Dendritic cell treated with granulocyte-macrophage colony-stimulating factor and Interleukin-4, amounts not matched to agents 40 ng/mL and 50 ng/mL, for 4 days (primary cell): ENCODE measurements at regions of chr4 and their contacts with region 1.

Region 1: DNA sequence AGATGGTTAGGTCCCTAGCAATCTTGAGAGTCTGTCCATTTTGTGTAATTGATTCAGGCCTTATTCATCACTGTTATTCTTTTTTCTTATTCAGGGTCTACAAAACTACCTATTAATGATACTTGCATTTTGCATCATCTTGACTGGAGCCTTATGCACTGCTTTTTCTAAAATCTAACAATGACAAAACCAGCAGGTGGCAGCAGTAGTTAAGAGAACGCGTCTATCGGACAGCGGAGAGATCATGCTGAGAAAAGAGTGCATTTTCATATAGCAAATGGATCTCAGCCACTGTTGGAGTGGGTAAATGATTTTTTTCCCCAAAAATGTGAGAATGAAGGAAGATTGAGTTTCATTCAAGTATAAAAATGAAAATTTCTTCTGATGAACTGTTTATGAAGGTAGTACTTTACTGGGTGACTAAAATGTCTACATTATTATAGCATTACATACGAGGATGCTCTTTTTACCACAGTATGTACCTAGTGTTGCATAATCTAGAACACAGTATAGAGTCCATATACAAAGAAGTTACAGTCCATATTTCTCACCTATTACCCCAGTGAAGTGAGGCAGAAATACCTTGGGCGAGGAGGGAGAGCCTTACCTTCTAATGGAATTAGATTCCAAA is 43.2 kb downstream of the TMEM144 start:
- H3K4me3 Mint-ChIP-seq: no peak overlapping the region
- H3K27ac Mint-ChIP-seq: no peak overlapping the region
- H3K4me1 Mint-ChIP-seq: peaks cover 18% of the 10 kb centered on the region
- H3K27me3 Mint-ChIP-seq: no peaks in the 10 kb centered on the region

Region 2: DNA sequence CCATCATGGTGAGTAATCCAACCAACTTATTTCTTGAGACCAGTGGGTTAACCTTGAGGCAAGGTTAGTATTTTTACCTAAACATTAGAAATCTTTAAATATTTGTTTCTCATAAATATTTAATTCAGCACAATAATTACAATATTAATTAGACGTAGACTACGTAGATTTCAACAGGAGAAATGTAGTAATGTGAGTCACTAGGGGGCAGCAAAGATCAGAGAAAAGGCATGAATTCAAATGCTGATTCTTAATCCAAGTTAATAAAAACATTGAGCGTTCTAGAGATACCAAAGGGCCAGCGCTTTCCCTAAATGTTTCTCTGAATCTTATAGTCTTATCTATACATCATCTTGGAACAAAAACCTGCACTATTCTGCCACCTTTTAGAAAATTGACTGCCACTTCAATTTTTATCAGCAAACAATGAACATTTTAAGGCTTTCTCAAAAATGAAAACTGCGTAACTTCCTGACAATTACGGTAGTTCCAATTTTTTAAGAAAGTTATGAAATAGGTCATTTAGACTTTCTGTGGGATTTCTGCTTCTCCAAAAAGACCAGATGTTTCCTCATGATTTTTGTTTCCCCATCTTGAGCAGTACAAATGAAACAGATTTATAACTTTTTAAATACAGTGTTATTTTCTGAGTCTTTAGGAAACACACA is 261.3 kb before region 1 on chr4:
- intact Hi-C with region 1: loop called (anchors 1 kb)
- H3K4me3 Mint-ChIP-seq: peak overlapping the region; percentile 75
- H3K27ac Mint-ChIP-seq: peak overlapping the region; percentile 86
- H3K4me1 Mint-ChIP-seq: peaks cover 49% of the 10 kb centered on the region
- H3K27me3 Mint-ChIP-seq: no peaks in the 10 kb centered on the region

Region 3: GRCh38 chr4:158193171-158193749 is 60.2 kb before region 1 on chr4:
- intact Hi-C with region 1: loop called (anchors 1 kb)
- H3K4me3 Mint-ChIP-seq: no peak overlapping the region
- H3K27ac Mint-ChIP-seq: peak overlapping the region; percentile 15
- H3K4me1 Mint-ChIP-seq: peaks cover 11% of the 10 kb centered on the region
- H3K27me3 Mint-ChIP-seq: no peaks in the 10 kb centered on the region

Region 4: DNA sequence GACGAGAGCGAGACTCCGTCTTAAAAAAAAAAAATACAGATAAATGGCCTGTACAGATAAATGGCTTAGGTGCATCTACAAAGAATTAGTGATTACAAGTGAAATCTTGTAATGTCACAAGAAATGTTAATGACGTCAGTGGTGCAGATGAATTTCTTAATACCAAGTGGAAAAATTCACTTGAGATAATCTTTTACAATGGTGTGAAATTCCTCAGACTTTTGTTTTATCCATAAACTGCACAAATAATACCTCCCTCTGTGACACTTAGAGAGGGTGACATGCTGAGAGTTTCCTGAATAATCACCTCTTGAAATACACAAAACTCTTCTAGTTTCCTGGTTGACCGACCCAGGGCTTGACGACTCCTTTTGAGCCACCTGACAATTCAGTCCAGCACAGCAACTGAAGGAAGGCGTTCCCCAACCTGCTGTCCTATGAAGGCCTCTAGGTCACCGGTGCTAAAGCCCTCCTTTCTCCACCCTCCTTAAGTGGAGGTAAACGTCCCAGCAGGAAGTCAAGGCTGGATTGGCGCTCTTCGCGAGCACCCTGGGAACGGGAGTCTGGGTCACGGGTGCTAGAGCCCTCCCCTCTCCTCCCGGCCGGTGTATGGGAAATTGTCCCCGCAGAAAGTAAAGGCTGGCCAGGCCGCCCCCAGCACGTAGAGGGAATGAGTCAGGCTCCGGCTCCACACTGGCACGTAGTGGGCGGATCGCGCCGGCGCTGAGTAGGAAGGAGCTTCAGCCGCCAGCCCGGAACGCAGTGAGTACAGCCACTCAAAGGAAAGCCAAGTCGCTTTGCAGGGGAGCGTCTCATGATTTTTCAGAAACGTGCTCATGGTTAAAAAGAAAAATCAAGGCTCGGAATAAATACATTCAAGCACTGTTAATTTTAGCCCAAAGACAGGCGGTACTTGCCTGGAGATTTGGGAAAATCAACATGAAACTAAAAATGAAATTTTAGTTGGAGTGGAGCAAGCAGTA is 43.3 kb before region 1 on chr4 and contains the start of gene TMEM144:
- intact Hi-C with region 1: loop called (anchors 5 kb)
- H3K4me3 Mint-ChIP-seq: peak within 1 kb of the TSS; percentile 81
- H3K27ac Mint-ChIP-seq: peak within 1 kb of the TSS; percentile 98
- H3K4me1 Mint-ChIP-seq: peaks cover 64% of the 10 kb centered on the region
- H3K27me3 Mint-ChIP-seq: no peaks in the 10 kb centered on the region

Region 5: DNA sequence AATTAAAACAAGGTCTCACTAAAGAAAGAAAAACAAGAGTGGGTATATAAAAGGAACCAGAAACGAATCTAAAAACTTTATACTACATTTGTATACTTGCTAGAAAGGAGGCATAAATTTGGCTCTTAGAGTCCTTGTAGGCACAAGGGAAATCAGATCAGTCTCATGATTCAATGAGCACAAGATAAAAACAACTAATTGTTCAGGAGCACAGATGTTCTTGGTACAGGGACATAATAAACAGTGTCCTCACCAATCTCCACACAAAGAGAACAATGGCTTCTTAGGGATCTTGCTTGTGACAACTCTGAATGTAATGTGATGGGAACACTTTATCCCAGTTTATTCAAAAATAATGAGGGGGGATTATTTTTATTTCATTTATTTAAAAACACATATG is 14.9 kb before region 1 on chr4:
- intact Hi-C with region 1: loop called (anchors 1 kb)
- H3K4me3 Mint-ChIP-seq: no peak overlapping the region
- H3K27ac Mint-ChIP-seq: no peak overlapping the region
- H3K4me1 Mint-ChIP-seq: peaks cover 6% of the 10 kb centered on the region
- H3K27me3 Mint-ChIP-seq: no peaks in the 10 kb centered on the region

Region 6: DNA sequence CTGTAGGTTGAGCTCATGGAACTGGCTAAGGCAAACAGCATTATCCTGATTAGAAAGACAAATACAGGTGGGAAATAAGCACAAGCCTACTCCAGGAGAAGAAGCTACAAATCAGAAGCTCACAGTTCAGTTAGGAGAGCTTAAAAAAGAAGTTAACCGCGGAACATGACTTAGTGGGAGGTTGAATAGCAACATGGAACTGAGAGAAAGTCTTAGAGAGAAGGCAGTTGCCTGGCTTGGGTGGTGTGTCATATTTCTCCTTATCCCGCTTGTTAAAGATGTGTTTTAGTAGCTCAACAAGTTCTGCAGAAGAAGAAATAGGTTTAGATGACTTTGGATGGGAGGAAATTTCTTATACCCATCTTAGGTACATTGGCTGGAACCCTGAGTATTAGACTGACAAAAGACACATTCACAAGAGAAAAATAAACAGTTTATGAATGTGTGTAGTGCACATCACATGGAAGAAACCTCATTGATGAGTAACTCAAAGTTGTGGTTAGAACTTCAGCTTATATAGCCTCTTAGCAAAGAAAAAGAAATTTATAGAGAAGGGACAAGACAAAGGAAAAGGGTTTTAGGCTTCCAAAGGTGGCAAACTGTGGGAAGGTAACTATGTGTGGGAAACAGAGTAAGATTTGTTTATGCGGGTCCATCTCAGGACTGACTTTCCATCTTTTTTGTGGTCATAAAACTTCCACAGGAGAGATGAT is 230.9 kb after region 1 on chr4:
- intact Hi-C with region 1: no loop called
- H3K4me3 Mint-ChIP-seq: no peak overlapping the region
- H3K27ac Mint-ChIP-seq: no peak overlapping the region
- H3K4me1 Mint-ChIP-seq: no peaks in the 10 kb centered on the region
- H3K27me3 Mint-ChIP-seq: no peaks in the 10 kb centered on the region

Region 7: DNA sequence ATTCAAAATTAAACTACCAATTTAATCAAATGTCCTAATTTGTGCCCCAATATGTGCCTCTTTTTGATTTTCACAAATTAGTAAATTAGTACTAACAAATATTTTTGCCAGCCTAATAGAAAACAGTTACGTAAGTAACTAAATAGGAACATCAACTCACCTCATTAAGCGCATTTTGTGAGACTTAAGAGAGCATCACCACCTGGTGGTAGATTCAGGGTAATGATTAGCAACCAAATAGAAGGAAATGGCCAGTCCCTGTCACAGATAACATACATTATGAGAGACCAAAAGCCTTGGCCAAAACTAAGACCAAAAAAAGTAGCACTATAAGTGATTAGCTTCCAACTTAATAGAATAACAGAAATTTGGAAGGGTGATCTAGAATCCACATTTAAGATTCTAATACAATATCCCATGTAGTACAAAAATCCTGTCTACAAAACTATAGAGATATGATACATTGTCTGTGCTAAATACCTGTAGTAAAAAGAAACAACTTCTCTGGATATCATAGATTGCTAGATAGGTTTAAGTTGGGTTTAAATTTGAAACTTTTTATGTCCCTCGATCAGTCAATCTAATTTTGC is 371.5 kb after region 1 on chr4:
- intact Hi-C with region 1: loop called (anchors 2 kb)
- H3K4me3 Mint-ChIP-seq: no peak overlapping the region
- H3K27ac Mint-ChIP-seq: no peak overlapping the region
- H3K4me1 Mint-ChIP-seq: no peaks in the 10 kb centered on the region
- H3K27me3 Mint-ChIP-seq: no peaks in the 10 kb centered on the region

Region 8: GRCh38 chr4:159169404-159170302 is 916.2 kb after region 1 on chr4:
- intact Hi-C with region 1: no loop called
- H3K4me3 Mint-ChIP-seq: no peak overlapping the region
- H3K27ac Mint-ChIP-seq: no peak overlapping the region
- H3K4me1 Mint-ChIP-seq: peaks cover 26% of the 10 kb centered on the region
- H3K27me3 Mint-ChIP-seq: no peaks in the 10 kb centered on the region